CD4-positive, alpha-beta T cell (primary cell): ENCODE measurements at regions of chr22 and their contacts with region 1.

Region 1: DNA sequence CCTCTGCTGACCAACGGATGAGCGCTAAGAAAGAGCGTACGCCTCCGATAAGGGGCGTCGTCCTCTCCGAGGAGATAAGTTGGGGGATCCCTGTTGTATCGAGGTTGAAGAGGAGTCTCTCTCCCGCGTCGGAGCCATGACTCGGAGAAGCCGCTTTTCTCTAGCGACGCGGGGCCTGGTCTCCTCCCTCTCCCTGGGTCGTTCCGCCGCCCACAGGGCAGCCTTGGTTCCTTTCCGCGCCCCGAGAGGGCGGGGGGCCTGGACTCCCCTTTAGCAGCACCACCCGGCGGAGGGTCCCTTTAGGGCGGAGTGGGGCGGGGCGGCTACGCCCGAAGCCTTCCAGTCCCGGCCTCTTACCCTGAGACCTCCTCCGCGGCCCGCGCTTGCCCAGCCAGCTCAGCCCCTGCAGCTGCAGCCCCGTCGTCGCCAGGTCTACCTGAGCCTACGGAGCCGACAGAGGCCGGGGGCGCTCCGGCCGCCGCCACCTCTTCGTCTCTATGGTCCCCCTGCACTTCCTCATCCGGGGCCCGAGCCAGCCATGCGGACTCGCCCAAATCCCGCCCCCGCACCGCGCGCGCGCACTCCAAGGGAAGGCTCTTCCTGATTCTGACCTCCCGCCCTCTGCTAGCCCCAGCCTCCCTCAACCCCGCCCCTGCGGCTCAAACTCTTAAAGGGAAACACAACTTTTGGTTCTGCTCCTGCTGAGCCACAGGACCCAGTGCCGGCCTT is at the start of gene PRR14L:
- DNase-seq: peak; percentile 93 to 99 (median 98)
- ATAC-seq: peak; percentile 72
- H3K4me3 ChIP-seq: peak within 1 kb of the TSS; percentile 77
- H3K4me3 Mint-ChIP-seq: peak within 1 kb of the TSS; percentile 98
- H3K27ac ChIP-seq: peak within 1 kb of the TSS; percentile 72 to 85
- H3K27ac Mint-ChIP-seq: peak within 1 kb of the TSS; percentile 97
- H3K4me1 ChIP-seq: peaks cover 45% of the 10 kb centered on the region
- H3K4me1 Mint-ChIP-seq: peaks cover 64% of the 10 kb centered on the region
- H3K27me3 ChIP-seq: no peaks in the 10 kb centered on the region
- H3K27me3 Mint-ChIP-seq: no peaks in the 10 kb centered on the region
- CTCF ChIP-seq: no peak
- total RNA-seq, gene PRR14L: 23.4 to 24.9 TPM

Region 2: GRCh38 chr22:30908051-30908461 is 841.7 kb before region 1 on chr22:
- CTCF ChIA-PET with region 1: no interaction called
- POLR2A ChIA-PET with region 1: no interaction called
- intact Hi-C with region 1: no loop called
- DNase-seq: peak in 1 of 14 experiments; percentile 5
- ATAC-seq: no peak
- H3K4me3 ChIP-seq: no peak overlapping the region
- H3K4me3 Mint-ChIP-seq: no peak overlapping the region
- H3K27ac ChIP-seq: no peak overlapping the region
- H3K27ac Mint-ChIP-seq: no peak overlapping the region
- H3K4me1 ChIP-seq: no peaks in the 10 kb centered on the region
- H3K4me1 Mint-ChIP-seq: peaks cover 2% of the 10 kb centered on the region
- H3K27me3 ChIP-seq: no peaks in the 10 kb centered on the region
- H3K27me3 Mint-ChIP-seq: no peaks in the 10 kb centered on the region
- CTCF ChIP-seq: no peak

Region 3: DNA sequence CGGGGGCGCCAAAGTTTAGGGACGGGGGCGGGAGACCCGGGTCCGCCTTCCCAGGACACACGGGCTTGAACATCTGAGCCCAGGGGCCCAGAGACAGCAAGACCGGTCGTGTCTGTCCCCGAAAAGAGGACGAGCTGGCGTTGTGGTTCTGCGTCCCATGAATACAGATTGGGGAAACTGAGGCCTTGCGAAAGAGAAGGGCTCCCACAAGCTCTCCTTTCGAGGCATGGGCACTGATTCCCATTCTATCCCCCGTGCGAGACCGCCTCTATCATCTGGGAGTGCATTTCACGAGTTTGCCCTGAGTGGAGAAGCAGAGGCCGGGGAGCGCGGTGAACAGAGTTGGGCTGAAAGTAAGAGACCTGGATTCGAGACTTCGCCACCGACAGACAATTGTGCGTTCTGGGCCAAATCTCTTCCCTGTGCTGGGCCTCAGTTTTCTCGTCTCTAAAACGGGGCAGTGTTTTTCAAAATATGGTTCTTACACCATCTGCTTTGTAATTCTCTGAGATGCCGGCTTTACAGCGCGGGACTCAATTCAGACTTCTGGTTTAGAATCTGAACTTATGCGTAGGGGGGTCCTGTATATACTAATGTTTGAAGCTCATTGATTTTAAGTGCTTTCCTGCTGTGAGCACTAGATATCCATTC is 589.3 kb before region 1 on chr22:
- CTCF ChIA-PET with region 1: no interaction called
- POLR2A ChIA-PET with region 1: no interaction called
- intact Hi-C with region 1: loop called in 1 of 2 experiments (anchors 5 kb)
- DNase-seq: peak in 8 of 14 experiments; percentile 0 to 45 (median 7)
- ATAC-seq: peak; percentile 46
- H3K4me3 ChIP-seq: peak overlapping the region; percentile 96
- H3K4me3 Mint-ChIP-seq: peak overlapping the region; percentile 100
- H3K27ac ChIP-seq: peak overlapping the region; percentile 69 to 94
- H3K27ac Mint-ChIP-seq: peak overlapping the region; percentile 89
- H3K4me1 ChIP-seq: peaks cover 23% of the 10 kb centered on the region
- H3K4me1 Mint-ChIP-seq: peaks cover 48% of the 10 kb centered on the region
- H3K27me3 ChIP-seq: no peaks in the 10 kb centered on the region
- H3K27me3 Mint-ChIP-seq: no peaks in the 10 kb centered on the region
- CTCF ChIP-seq: no peak

Region 4: GRCh38 chr22:31489604-31490495 is 259.9 kb before region 1 on chr22 and contains the start of gene EIF4ENIF1:
- CTCF ChIA-PET with region 1: no interaction called
- POLR2A ChIA-PET with region 1: no interaction called
- intact Hi-C with region 1: loop called (anchors 2 to 5 kb)
- DNase-seq: peak; percentile 78 to 93 (median 84)
- ATAC-seq: peak; percentile 77
- H3K4me3 ChIP-seq: peak within 1 kb of the TSS; percentile 78
- H3K4me3 Mint-ChIP-seq: peak within 1 kb of the TSS; percentile 91
- H3K27ac ChIP-seq: peak within 1 kb of the TSS; percentile 88 to 92
- H3K27ac Mint-ChIP-seq: peak within 1 kb of the TSS; percentile 97
- H3K4me1 ChIP-seq: peaks cover 38% of the 10 kb centered on the region
- H3K4me1 Mint-ChIP-seq: peaks cover 57% of the 10 kb centered on the region
- H3K27me3 ChIP-seq: no peaks in the 10 kb centered on the region
- H3K27me3 Mint-ChIP-seq: no peaks in the 10 kb centered on the region
- CTCF ChIP-seq: no peak
- total RNA-seq, gene EIF4ENIF1: 9.4 to 10.6 TPM

Region 5: DNA sequence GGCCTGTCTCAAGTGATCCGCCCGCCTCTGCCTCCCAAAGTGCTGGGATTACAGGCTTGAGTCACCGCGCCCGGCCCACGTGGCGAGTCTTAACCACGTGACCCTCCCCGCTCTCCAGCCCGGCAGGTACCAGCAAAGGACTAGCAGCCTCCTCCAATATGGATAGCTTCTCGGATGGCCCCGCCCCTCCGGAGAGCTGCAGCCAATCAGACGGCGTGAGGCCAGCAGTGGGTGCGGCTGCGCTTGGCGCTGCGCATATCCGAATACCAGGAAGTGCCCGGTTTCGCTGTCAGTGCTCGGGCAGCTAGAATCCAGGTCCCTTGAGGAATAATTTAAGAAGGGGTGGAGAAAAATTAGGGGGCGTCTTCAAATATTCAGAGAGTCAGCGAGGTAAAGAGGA is 73.1 kb before region 1 on chr22:
- CTCF ChIA-PET with region 1: no interaction called
- POLR2A ChIA-PET with region 1: interaction called, 12 read pairs
- intact Hi-C with region 1: loop called in 1 of 2 experiments (anchors 5 kb)
- DNase-seq: peak; percentile 85 to 96 (median 90)
- ATAC-seq: peak; percentile 100
- H3K4me3 ChIP-seq: peak overlapping the region; percentile 69
- H3K4me3 Mint-ChIP-seq: peak overlapping the region; percentile 94
- H3K27ac ChIP-seq: peak overlapping the region in 1 of 2 donors; percentile 77
- H3K27ac Mint-ChIP-seq: peak overlapping the region; percentile 90
- H3K4me1 ChIP-seq: peaks cover 11% of the 10 kb centered on the region
- H3K4me1 Mint-ChIP-seq: peaks cover 10% of the 10 kb centered on the region
- H3K27me3 ChIP-seq: no peaks in the 10 kb centered on the region
- H3K27me3 Mint-ChIP-seq: no peaks in the 10 kb centered on the region
- CTCF ChIP-seq: no peak

Region 6: GRCh38 chr22:32411829-32412592 is 662.2 kb after region 1 on chr22 and contains the start of gene RTCB:
- CTCF ChIA-PET with region 1: no interaction called
- POLR2A ChIA-PET with region 1: no interaction called
- intact Hi-C with region 1: loop called in 1 of 2 experiments (anchors 5 kb)
- DNase-seq: peak; percentile 88 to 96 (median 92)
- ATAC-seq: peak; percentile 85
- H3K4me3 ChIP-seq: peak within 1 kb of the TSS; percentile 72
- H3K4me3 Mint-ChIP-seq: peak within 1 kb of the TSS; percentile 98
- H3K27ac ChIP-seq: peak within 1 kb of the TSS; percentile 25 to 76
- H3K27ac Mint-ChIP-seq: peak within 1 kb of the TSS; percentile 85
- H3K4me1 ChIP-seq: peaks cover 23% of the 10 kb centered on the region
- H3K4me1 Mint-ChIP-seq: peaks cover 55% of the 10 kb centered on the region
- H3K27me3 ChIP-seq: no peaks in the 10 kb centered on the region
- H3K27me3 Mint-ChIP-seq: peaks cover 7% of the 10 kb centered on the region
- CTCF ChIP-seq: no peak
- total RNA-seq, gene RTCB: 30.1 to 36.0 TPM